ENCODE measurements at regions of chr3 and their contacts with region 1.

Region 1: GRCh38 chr3:78368581-78369345 is 1328.9 kb downstream of the ROBO2 start:
- DNase-seq: no peak
- H3K4me3 Mint-ChIP-seq: no peak overlapping the region
- H3K27ac Mint-ChIP-seq: peak overlapping the region; percentile 68
- H3K4me1 Mint-ChIP-seq: peaks cover 9% of the 10 kb centered on the region
- H3K27me3 Mint-ChIP-seq: no peaks in the 10 kb centered on the region
- CTCF ChIP-seq: no peak

Region 2: GRCh38 chr3:78274475-78275065 is 94.2 kb before region 1 on chr3:
- CTCF ChIA-PET with region 1: no interaction called
- intact Hi-C with region 1: loop called (anchors 5 kb)
- DNase-seq: no peak
- H3K4me3 Mint-ChIP-seq: no peak overlapping the region
- H3K27ac Mint-ChIP-seq: no peak overlapping the region
- H3K4me1 Mint-ChIP-seq: peaks cover 13% of the 10 kb centered on the region
- H3K27me3 Mint-ChIP-seq: no peaks in the 10 kb centered on the region
- CTCF ChIP-seq: no peak

Region 3: GRCh38 chr3:78427303-78427702 is 58.5 kb after region 1 on chr3:
- CTCF ChIA-PET with region 1: no interaction called
- intact Hi-C with region 1: no loop called
- DNase-seq: no peak
- H3K4me3 Mint-ChIP-seq: no peak overlapping the region
- H3K27ac Mint-ChIP-seq: no peak overlapping the region
- H3K4me1 Mint-ChIP-seq: no peaks in the 10 kb centered on the region
- H3K27me3 Mint-ChIP-seq: no peaks in the 10 kb centered on the region
- CTCF ChIP-seq: no peak

Measured in Calu3 (cell line).